ENCODE measurements at regions of chr7 and their contacts with region 1.

Region 1: DNA sequence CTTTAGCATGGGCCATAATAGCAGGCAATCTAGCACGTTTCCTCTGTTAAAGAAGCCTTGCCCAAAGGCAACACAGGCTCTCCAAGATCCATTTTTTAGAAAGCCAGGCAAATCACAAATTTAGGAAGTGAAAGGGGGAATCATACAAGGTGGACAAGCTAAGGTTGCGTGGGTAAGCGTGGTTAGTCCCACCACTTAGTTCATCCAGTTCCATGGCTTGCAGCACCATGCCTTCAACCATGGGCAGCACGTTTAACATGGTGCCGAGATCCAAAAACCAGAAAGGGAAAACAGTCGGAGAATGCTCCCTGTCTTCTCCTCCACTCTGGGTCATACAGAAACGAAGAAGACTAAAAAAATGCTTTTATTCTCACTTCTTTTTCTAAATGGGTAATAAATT is 234.4 kb upstream of the IMMP2L start:
- DNase-seq: peak in 1 of 2 donors; percentile 23
- ATAC-seq: no peak
- H3K4me3 ChIP-seq: no peak overlapping the region
- H3K4me3 Mint-ChIP-seq: no peak overlapping the region
- H3K27ac ChIP-seq: no peak overlapping the region
- H3K27ac Mint-ChIP-seq: no peak overlapping the region
- H3K4me1 ChIP-seq: no peaks in the 10 kb centered on the region
- H3K4me1 Mint-ChIP-seq: no peaks in the 10 kb centered on the region
- H3K27me3 ChIP-seq: no peaks in the 10 kb centered on the region
- H3K27me3 Mint-ChIP-seq: no peaks in the 10 kb centered on the region
- CTCF ChIP-seq: no peak

Region 2: GRCh38 chr7:111770116-111770515 is 26.6 kb before region 1 on chr7:
- intact Hi-C with region 1: loop called (anchors 1 kb)
- DNase-seq: no peak
- ATAC-seq: no peak
- H3K4me3 ChIP-seq: no peak overlapping the region
- H3K4me3 Mint-ChIP-seq: no peak overlapping the region
- H3K27ac ChIP-seq: no peak overlapping the region
- H3K27ac Mint-ChIP-seq: no peak overlapping the region
- H3K4me1 ChIP-seq: no peaks in the 10 kb centered on the region
- H3K4me1 Mint-ChIP-seq: no peaks in the 10 kb centered on the region
- H3K27me3 ChIP-seq: no peaks in the 10 kb centered on the region
- H3K27me3 Mint-ChIP-seq: no peaks in the 10 kb centered on the region
- CTCF ChIP-seq: no peak

Region 3: GRCh38 chr7:112022128-112022527 is 225.5 kb after region 1 on chr7:
- intact Hi-C with region 1: no loop called
- DNase-seq: no peak
- ATAC-seq: peak in 1 of 3 donors; percentile 7
- H3K4me3 ChIP-seq: no peak overlapping the region
- H3K4me3 Mint-ChIP-seq: no peak overlapping the region
- H3K27ac ChIP-seq: no peak overlapping the region
- H3K27ac Mint-ChIP-seq: no peak overlapping the region
- H3K4me1 ChIP-seq: no peaks in the 10 kb centered on the region
- H3K4me1 Mint-ChIP-seq: no peaks in the 10 kb centered on the region
- H3K27me3 ChIP-seq: no peaks in the 10 kb centered on the region
- H3K27me3 Mint-ChIP-seq: peaks cover 0 to 3% of the 10 kb centered on the region in 2 donors
- CTCF ChIP-seq: no peak

Measured in natural killer cell (primary cell).